Heart right ventricle (tissue), 16 donors: ENCODE measurements at regions of chr1 and their contacts with region 1.

Region 1: DNA sequence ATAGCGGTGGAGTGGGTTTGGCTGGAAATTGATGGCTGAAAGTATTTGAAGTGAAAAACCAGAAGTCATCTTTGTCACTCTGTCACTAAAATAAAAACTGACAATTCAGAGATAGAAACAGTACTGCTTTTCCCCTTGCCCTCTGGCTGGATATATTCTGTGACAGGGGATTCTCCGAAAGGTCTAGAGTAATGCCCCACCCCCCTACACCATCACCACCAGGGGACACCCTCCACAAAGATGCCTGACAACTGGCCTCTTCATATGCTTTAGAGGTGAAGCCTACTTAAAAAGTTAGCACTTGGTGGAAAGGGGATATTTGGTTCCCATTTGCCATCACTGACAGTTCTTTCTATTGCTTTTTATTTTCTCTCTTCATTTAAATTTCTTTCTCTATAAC is 73.5 kb downstream of the SGIP1 start:
- DNase-seq: no peak
- ATAC-seq: no peak
- H3K4me3 ChIP-seq: no peak overlapping the region
- H3K27ac ChIP-seq: no peak overlapping the region
- H3K4me1 ChIP-seq: peaks cover 0 to 5% (median 0%) of the 10 kb centered on the region in 9 donors
- H3K27me3 ChIP-seq: no peaks in the 10 kb centered on the region
- CTCF ChIP-seq: peak in 2 of 9 donors; percentile 10 to 20

Region 2: DNA sequence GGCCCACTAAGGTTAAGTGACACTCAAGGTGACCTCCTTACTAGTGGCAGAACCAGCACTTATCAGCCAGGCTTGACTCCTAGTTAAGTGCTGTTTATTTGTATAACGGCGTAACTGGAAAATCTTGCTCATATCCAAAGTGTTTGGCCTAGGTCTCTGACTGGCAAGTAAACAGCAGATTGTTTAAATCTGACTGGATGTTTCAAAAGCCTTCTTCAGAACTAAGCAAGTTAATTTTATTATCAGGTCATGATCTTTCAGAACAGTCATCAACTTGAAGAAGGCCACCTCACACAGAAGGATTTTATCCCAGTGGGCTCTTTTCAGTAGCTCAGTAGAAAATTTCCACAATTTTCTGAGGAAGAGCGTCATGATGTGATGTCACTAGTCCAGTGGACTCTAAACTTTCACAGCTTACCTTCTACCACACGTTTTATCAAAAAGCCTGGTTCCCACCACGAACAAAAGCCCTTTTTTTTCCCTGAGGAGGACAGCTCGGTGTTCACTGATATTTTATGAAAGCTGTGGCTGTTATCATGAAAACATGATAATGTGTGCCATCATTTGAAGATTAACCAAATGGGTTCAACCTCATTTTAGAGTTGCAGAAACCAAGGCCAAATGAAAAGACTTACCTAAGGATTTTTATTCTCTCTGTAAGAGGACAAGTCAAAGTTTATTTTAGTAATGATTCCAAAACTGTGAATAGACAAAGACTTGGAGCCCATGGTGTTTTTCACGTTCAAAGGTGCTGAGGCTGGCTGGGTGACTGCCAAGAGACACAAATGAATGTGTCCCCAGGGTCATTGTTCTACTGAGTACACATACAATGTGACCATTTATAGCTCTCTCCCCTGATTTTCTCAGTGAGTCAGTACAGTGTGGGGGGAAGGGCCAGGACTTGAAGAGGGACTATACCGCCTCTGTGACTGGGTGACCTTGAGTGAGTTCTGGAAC is 64.4 kb before region 1 on chr1:
- intact Hi-C with region 1: loop called in 1 of 10 experiments (anchors 5 kb)
- DNase-seq: peak; percentile 60 to 91
- ATAC-seq: peak; percentile 94 to 98 (median 97)
- H3K4me3 ChIP-seq: no peak overlapping the region
- H3K27ac ChIP-seq: peak overlapping the region; percentile 55 to 83 (median 76)
- H3K4me1 ChIP-seq: peaks cover 7 to 79% (median 33%) of the 10 kb centered on the region in 9 donors
- H3K27me3 ChIP-seq: no peaks in the 10 kb centered on the region
- CTCF ChIP-seq: no peak

Region 3: GRCh38 chr1:66648901-66649595 is 41.6 kb after region 1 on chr1:
- intact Hi-C with region 1: no loop called
- DNase-seq: no peak
- ATAC-seq: no peak
- H3K4me3 ChIP-seq: no peak overlapping the region
- H3K27ac ChIP-seq: no peak overlapping the region
- H3K4me1 ChIP-seq: peaks cover 0 to 6% (median 0%) of the 10 kb centered on the region in 9 donors
- H3K27me3 ChIP-seq: no peaks in the 10 kb centered on the region
- CTCF ChIP-seq: no peak